PC-3 (cell line): ENCODE measurements at regions of chr6 and their contacts with region 1.

Region 1: GRCh38 chr6:158046201-158047126 is 64.8 kb downstream of the SYNJ2 start:
- DNase-seq: no peak
- ATAC-seq: no peak
- H3K4me3 ChIP-seq: no peak overlapping the region
- H3K27ac ChIP-seq: peak overlapping the region; percentile 64
- H3K4me1 ChIP-seq: peaks cover 37% of the 10 kb centered on the region
- H3K27me3 ChIP-seq: no peaks in the 10 kb centered on the region
- CTCF ChIP-seq: no peak

Region 2: DNA sequence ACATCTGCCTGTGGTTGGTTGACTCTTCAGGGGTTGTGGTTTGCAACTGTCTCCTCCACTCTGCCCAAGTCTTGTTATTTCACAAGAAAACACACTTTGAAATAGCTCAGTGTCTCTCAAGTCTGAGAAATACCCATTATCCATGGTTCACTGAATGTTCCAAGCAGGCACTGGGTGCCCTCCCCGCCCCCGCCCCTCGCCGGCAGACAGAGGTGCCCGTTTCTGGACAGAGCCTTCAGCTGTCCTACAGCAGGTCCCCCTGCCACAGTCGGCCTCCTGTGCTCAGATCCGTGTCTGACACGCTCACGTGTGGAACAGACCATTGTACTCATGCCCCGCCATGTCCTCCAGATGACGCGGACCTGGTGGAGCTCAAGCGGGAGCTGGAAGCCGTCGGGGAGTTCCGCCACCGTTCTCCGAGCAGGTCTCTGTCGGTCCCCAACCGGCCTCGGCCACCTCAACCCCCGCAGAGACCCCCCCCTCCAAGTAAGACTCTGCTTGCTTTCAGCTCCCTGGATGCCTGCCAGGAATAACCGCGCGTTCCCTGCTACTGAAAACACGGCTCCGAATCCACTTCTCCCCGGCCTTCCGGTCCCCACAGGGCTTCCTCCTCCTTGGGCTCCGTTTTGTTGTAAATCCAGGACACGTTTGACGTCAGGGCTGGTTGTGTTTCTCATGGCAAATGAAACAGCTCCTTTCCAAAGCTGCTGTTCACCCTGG is 40.2 kb after region 1 on chr6:
- CTCF ChIA-PET with region 1: no interaction called
- POLR2A ChIA-PET with region 1: no interaction called
- intact Hi-C with region 1: no loop called
- DNase-seq: no peak
- ATAC-seq: no peak
- H3K4me3 ChIP-seq: no peak overlapping the region
- H3K27ac ChIP-seq: no peak overlapping the region
- H3K4me1 ChIP-seq: no peaks in the 10 kb centered on the region
- H3K27me3 ChIP-seq: no peaks in the 10 kb centered on the region
- CTCF ChIP-seq: no peak

Region 3: GRCh38 chr6:158143700-158144099 is 97.2 kb after region 1 on chr6:
- CTCF ChIA-PET with region 1: interaction called, 18 read pairs
- POLR2A ChIA-PET with region 1: no interaction called
- intact Hi-C with region 1: no loop called
- DNase-seq: peak; percentile 30
- ATAC-seq: no peak
- H3K4me3 ChIP-seq: no peak overlapping the region
- H3K27ac ChIP-seq: no peak overlapping the region
- H3K4me1 ChIP-seq: peaks cover 15% of the 10 kb centered on the region
- H3K27me3 ChIP-seq: no peaks in the 10 kb centered on the region
- CTCF ChIP-seq: peak; percentile 55